ENCODE measurements at regions of chr4 and their contacts with region 1.

Region 1: GRCh38 chr4:76588274-76588673 is 153.2 kb downstream of the SHROOM3 start:
- DNase-seq: no peak
- H3K4me3 Mint-ChIP-seq: no peak overlapping the region
- H3K27ac Mint-ChIP-seq: no peak overlapping the region
- H3K4me1 Mint-ChIP-seq: peaks cover 9% of the 10 kb centered on the region
- H3K27me3 Mint-ChIP-seq: peaks cover 40% of the 10 kb centered on the region

Region 2: DNA sequence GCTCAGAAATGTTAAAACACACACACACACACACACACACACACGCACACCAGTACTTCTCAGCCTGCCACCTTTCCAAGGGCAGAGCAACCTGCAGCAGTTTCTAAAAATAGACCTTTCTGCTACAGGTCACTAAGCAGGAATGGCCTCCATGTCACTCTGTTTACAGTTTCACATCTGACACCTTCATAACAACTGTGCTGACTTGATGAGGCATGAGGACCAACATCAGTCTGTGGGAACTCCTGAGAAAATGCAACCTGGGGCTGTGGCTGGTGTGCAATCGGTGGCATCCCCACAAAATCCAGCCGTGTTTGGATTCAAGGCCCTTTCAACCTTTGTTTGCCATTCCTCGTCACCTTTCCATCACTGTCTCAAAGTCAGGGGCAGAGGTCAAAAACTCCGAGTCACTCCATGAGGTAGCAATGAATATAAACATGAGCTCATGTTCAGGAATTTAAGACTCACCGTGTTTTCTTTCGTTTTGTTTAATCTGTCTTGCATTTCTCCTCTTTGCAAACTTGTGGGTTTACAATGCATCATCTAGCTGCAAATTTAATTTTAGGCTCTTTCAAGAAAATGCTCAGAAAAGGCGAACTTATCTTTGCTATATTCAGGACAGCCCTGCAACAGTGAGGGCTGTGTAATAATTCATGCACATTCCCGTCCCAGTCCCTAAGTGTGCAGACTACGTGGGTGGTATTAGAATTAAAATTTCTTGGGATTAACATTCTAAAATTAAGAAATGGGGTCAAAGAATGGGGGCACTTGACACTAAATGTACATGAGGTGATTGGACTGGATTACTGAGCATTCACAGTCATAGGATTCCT is 17.9 kb before region 1 on chr4:
- CTCF ChIA-PET with region 1: no interaction called
- intact Hi-C with region 1: loop called (anchors 1 kb)
- DNase-seq: no peak
- H3K4me3 Mint-ChIP-seq: no peak overlapping the region
- H3K27ac Mint-ChIP-seq: no peak overlapping the region
- H3K4me1 Mint-ChIP-seq: no peaks in the 10 kb centered on the region
- H3K27me3 Mint-ChIP-seq: peaks cover 11% of the 10 kb centered on the region

Measured in activated naive CD4-positive, alpha-beta T cell treated with anti-CD3 and anti-CD28 coated beads for 36 hours (primary cell).